AG04449 (cell line): ENCODE measurements at regions of chr17 and their contacts with region 1.

Region 1: DNA sequence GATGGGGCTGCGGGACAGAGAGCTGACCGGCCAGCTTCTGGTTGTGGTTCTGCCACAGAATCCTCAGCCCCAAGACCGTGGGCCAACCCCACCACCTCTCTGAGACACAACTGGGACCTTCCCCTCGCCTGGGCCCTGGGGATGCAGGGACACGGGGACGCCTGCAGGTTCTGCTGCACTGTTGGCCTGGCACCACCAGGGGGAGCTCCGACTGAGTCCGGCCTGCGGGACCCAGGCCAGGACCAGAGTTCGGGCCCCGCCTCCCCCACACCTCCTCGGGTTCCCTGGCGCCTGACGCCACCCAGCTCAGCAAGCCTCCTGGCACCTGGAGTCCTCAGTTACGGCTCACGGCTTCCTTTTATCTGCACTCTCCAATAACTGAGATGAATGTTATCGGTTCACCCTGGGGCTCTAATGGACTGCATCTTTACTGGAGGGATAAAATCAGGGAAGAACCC is 27.3 kb downstream of the TBC1D16 start:
- DNase-seq: no peak
- H3K4me3 ChIP-seq: no peak overlapping the region
- CTCF ChIP-seq: peak; percentile 99

Region 2: GRCh38 chr17:79930877-79931816 is 77.3 kb before region 1 on chr17:
- CTCF ChIA-PET with region 1: no interaction called
- POLR2A ChIA-PET with region 1: no interaction called
- DNase-seq: no peak
- H3K4me3 ChIP-seq: no peak overlapping the region
- CTCF ChIP-seq: no peak

Region 3: DNA sequence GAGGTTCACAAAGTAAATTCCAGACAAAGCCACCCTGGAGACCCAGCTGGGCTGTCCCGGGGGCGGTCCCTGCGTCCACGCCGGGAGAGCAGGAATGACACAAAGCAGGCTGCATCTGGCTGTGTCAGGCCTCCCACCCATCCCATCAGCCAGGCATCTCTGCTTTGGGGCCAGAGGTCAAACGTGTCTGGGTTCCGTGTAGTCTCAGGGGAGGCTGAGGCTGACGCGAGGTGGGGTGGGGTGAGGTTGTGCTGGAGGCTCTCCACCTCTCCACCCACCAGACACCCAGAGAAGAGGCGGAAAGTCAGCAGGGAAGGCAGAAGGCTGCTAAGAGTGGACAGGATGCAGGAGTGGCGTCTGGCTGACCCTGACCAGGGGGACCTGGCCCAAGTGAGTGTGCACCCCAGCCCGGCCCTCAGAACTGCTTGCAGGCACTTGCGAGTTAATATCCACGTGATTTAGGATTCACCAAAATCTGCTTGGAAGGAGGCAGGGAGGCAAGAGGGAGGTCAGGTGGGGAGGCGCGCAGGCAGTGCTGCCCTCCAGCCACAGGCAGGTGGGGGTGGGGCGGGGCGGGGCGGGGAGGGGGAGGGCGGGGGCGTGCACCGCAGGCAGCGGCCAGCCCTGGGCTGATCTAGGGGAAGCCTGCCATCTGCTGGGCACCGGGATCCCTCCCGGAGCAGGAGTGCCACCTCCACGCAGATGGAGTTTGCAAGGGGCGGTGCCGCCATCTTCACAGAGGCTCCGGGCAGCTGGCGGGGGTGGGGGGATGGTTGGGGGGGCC is 17.1 kb before region 1 on chr17:
- CTCF ChIA-PET with region 1: interaction called, 128 read pairs
- POLR2A ChIA-PET with region 1: interaction called, 3 read pairs
- DNase-seq: no peak
- H3K4me3 ChIP-seq: peak overlapping the region; percentile 42
- CTCF ChIP-seq: peak; percentile 86

Region 4: DNA sequence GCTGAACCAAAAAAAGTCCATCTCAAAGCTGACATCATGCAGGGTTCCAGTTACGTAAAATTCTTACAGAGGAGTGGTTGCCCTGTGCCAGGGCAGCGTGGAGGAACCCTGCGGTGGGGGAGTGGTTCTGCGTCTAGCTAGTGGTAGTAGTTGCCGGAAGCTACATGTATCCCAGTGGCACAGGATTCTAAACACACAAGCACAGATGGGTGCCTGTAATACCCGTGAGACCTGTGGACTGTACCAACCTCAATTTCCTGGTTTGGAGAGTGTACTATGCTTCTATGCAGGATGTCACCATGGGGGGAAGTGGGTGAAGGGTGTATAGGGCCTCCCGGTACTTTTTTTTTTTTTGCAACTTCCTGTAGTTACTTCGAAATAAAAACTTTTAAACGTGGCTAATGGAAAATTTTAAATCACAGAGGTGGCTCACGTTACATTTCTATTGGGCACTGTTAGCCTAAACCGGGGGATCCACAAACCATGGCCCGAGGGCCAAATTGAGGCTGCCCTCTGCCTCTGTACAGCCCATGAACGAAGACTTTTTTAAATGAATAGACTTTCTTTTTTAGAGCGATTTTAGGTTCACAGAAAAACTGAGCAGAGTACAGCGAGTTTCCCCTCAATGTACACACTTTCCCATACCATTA is 11.3 kb before region 1 on chr17:
- CTCF ChIA-PET with region 1: interaction called, 128 read pairs
- POLR2A ChIA-PET with region 1: interaction called, 3 read pairs
- DNase-seq: no peak
- H3K4me3 ChIP-seq: no peak overlapping the region
- CTCF ChIP-seq: no peak

Region 5: DNA sequence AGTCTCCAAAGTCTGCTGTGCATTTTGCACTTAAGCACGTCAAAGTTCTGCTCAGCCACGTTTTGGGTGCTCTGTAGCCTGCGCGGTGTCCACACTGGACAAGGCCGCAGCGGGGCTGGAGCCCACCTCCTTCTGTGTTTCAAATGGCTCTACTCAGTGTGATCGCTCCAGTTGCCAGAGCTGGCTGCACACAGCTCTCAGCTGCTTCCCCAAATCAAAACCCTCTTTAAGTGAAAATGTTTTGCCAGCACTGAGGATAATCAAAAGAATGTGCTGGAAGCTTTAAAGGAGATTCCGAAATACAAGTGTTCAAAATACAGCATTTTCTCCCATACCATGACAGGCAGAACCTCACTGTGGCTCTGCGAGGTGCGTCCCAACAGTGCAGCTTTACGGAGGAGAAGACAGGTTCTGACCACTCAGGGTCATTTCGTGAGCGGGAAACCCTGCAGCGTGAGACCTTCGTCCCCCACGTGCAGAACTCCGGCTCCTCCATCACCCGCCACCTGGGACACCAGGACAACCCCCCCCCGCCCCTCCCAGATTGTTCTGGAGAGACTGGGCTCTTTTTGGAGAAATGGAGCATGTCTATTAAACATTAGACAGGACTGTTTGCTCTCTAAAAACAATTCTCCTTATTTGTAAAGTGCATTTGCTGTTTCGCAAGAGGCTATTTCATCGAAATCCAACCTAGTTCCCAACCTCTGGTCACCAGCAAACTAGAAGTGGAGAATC is 10.7 kb after region 1 on chr17:
- CTCF ChIA-PET with region 1: interaction called, 85 read pairs
- POLR2A ChIA-PET with region 1: no interaction called
- DNase-seq: no peak
- H3K4me3 ChIP-seq: no peak overlapping the region
- CTCF ChIP-seq: no peak

Region 6: GRCh38 chr17:80034791-80035692 is 26.6 kb after region 1 on chr17:
- CTCF ChIA-PET with region 1: interaction called, 212 read pairs
- POLR2A ChIA-PET with region 1: no interaction called
- DNase-seq: no peak
- H3K4me3 ChIP-seq: peak overlapping the region; percentile 74
- CTCF ChIP-seq: no peak